Activated B cell treated with CpG ODN at 0.5 μM for 24 hours (primary cell): ENCODE measurements at regions of chr1 and their contacts with region 1.

Region 1: DNA sequence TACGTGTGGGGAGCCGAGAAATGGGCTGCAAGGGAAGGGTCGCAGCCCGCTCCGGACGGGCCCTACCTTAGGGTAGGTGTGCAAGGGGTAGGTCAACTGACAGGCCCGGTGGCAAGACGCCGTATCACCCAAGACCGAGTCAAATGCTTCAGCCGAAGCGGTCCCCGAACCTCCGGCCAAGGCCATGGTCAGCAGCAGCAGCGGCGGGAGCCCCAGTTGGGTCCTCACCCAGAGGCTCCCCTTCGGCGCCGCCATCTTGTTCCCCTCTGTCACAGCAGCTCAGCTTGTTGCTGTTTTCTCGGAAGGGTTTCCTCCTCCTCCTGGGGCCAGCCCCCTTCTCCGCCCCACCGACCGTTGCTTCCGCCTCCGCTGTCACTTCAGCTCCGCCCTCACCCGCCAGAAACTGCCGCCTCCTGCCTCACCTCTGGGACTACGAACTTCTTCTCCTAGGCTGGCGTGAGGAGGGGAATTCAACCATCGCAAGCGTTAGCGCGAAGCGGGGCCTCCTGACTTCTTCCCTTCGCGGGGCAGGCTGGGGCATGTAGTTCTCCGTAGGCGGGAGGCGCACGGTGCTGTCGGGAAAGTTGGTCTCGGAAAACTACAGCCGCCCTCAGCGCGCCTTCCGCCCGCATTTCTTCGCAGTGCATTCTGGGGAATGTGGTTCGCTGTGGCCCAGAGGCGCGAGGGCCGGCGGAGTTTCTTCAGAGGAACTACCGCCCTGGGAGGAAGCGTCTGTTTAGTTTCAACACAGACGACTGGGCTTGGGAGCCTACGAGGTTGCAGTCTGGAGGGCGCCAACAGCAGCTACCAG is at the starts of genes TCEANC2 and TMEM59:
- DNase-seq: peak; percentile 92
- ATAC-seq: peak; percentile 92
- H3K4me3 Mint-ChIP-seq: no peak within 1 kb of the TSS
- H3K27ac Mint-ChIP-seq: no peak within 1 kb of the TSS
- H3K4me1 Mint-ChIP-seq: peaks cover 38% of the 10 kb centered on the region
- H3K27me3 Mint-ChIP-seq: no peaks in the 10 kb centered on the region
- CTCF ChIP-seq: no peak
- total RNA-seq, gene TCEANC2: 7.3 and 8.1 TPM in 2 replicates
- total RNA-seq, gene TMEM59: 103 and 123 TPM in 2 replicates

Region 2: GRCh38 chr1:53238197-53239155 is 814.7 kb before region 1 on chr1 and contains the start of gene MAGOH:
- CTCF ChIA-PET with region 1: no interaction called
- POLR2A ChIA-PET with region 1: no interaction called
- intact Hi-C with region 1: loop called (anchors 2 kb)
- DNase-seq: peak; percentile 93
- ATAC-seq: peak; percentile 100
- H3K4me3 Mint-ChIP-seq: peak within 1 kb of the TSS; percentile 97
- H3K27ac Mint-ChIP-seq: peak within 1 kb of the TSS; percentile 91
- H3K4me1 Mint-ChIP-seq: peaks cover 32% of the 10 kb centered on the region
- H3K27me3 Mint-ChIP-seq: no peaks in the 10 kb centered on the region
- CTCF ChIP-seq: no peak
- total RNA-seq, gene MAGOH: 56.6 and 65.0 TPM in 2 replicates

Region 3: DNA sequence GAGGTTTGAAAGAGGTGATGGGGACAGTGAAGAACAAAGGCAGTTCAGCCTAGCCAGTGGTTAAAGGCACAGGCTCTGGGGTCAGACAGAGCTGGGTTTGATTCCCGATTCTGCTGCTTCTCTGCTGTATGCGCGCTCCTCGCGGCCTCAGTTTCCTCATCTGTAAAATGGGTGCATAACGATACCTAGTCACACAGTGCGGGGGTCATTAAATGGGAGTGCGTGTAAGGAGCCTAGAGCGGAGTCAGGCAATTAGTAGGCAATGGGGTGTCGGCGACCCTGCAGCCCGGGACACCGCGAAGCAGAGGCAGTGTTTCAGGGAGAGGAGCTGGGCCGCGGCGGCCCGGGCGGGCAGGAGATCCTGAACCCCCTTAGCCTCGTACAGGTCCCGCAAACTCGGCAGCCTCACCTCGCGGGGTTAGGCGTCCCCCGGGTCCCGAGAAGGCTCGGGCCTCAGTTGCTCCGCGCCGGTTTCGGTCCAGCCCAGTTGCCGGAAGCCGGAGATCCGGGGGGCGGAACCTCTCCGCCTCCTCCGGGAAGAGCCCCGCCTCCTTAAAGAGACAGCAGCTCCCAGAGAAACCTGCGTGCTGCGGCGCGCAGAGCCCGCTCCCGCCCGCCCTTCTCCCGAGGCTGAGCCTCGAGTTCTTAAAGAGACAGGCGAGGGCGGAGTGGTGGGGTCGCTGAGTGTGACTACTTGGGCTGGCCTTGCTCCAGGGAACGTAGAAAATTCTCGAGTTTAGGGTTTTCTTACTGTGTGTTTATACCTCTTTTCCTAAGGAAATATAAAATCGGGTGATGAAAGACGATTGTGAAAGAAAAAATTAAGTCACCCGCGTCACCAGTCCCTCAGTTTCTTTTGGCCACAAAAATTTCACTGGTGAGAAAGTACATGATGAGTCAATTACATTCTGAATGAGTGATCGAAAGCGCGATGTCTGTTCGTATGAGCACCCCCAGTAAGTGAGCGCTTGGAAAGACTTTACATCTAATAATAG is 163.5 kb before region 1 on chr1 and contains the start of gene YIPF1:
- CTCF ChIA-PET with region 1: no interaction called
- POLR2A ChIA-PET with region 1: no interaction called
- intact Hi-C with region 1: loop called (anchors 1 kb)
- DNase-seq: peak; percentile 81
- ATAC-seq: peak; percentile 98
- H3K4me3 Mint-ChIP-seq: peak within 1 kb of the TSS; percentile 98
- H3K27ac Mint-ChIP-seq: peak within 1 kb of the TSS; percentile 94
- H3K4me1 Mint-ChIP-seq: peaks cover 40% of the 10 kb centered on the region
- H3K27me3 Mint-ChIP-seq: no peaks in the 10 kb centered on the region
- CTCF ChIP-seq: no peak
- total RNA-seq, gene YIPF1: 16.6 and 18.5 TPM in 2 replicates

Region 4: GRCh38 chr1:54199765-54200518 is 146.8 kb after region 1 on chr1 and contains the starts of genes CYB5RL and MRPL37:
- CTCF ChIA-PET with region 1: no interaction called
- POLR2A ChIA-PET with region 1: interaction called, 7 read pairs
- intact Hi-C with region 1: loop called (anchors 1 kb)
- DNase-seq: peak; percentile 74
- ATAC-seq: peak; percentile 99
- H3K4me3 Mint-ChIP-seq: peak within 1 kb of the TSS; percentile 92
- H3K27ac Mint-ChIP-seq: peak within 1 kb of the TSS; percentile 81
- H3K4me1 Mint-ChIP-seq: peaks cover 32% of the 10 kb centered on the region
- H3K27me3 Mint-ChIP-seq: no peaks in the 10 kb centered on the region
- CTCF ChIP-seq: no peak
- total RNA-seq, gene CYB5RL: 8.4 and 8.7 TPM in 2 replicates
- total RNA-seq, gene MRPL37: 62.5 and 64.1 TPM in 2 replicates

Region 5: DNA sequence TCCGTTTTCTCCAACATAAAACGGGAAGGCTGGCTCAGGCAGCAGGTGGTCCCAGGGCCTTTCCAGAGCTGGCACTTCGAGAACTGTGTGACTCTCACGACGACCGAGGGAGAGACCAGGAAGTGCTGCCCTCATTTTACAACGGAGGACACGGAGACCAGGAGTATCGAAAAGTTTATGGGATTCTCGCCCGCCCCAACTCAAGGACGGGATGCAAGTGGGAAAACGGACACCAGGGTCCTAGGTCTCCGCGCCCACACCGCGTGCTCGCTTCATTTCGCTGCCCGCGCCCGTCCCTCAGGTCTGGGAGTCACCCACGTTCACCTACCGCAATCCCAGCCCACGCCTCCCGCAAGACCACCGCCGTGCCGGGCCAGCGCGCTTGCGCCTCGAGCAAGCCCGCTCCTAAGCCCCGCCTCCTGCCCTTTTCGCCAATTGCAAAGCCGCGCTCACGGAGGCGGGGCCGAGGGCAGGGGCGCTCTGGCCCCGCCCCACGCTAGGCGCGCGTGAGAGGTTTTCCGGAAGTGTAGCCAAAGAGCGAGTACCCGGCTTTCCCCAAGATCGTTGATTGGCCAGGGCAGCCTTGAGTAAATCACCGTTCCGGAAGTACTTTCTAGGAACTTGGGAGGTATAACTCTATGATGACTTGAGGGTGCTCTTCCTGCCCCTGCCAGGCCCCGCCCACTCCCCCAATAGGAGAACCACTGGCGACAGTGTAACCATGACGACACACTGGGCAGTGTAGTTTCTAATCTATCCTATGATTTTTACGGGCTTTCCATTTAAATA is 711.2 kb after region 1 on chr1 and contains the start of gene PARS2:
- CTCF ChIA-PET with region 1: no interaction called
- POLR2A ChIA-PET with region 1: interaction called, 3 read pairs
- intact Hi-C with region 1: loop called (anchors 1 kb)
- DNase-seq: peak; percentile 91
- ATAC-seq: peak; percentile 92
- H3K4me3 Mint-ChIP-seq: peak within 1 kb of the TSS; percentile 90
- H3K27ac Mint-ChIP-seq: peak within 1 kb of the TSS; percentile 89
- H3K4me1 Mint-ChIP-seq: peaks cover 24% of the 10 kb centered on the region
- H3K27me3 Mint-ChIP-seq: no peaks in the 10 kb centered on the region
- CTCF ChIP-seq: no peak
- total RNA-seq, gene PARS2: 4.3 and 4.8 TPM in 2 replicates